ENCODE measurements at regions of chr17 and their contacts with region 1.

Region 1: DNA sequence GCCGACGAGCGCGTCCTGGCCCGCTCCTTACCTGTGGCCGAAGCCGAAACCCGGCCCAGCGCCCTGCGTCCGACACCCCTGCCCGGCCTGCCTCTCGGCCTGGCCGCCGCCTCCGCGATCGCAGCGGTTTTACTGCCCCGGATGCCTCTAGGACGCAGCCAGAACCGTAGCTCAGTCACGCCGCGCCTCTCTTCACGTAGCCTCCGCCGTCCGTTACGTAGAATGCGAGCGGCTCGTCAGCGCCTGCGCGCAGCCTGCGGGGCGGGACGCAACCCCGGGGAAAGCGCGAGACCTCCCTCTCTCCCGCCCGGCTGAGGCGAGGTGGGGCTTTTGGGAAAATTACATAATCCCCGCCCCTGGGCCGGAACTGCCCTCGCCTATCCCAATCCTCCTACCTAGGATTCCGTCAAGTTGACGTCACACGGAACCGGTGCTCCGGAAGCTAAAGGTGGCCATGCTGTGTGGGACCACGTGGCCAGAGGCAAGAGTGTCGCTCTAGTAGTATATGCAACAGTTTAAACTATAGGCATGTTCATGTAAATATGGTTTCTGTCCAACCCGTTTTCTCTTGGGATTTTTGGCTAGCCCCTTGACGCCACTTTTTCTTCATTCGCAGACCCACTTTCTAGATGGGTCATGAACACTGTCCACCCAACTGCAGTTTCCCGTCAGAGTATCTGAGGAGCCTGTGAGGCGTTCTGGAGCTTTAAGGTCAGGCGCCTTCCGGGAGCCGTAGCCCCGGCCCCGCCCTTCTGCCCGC is at the start of gene CCDC47:
- DNase-seq: peak; percentile 96
- ATAC-seq: peak; percentile 76
- H3K4me3 Mint-ChIP-seq: peak within 1 kb of the TSS; percentile 92
- H3K27ac Mint-ChIP-seq: peak within 1 kb of the TSS; percentile 99
- H3K4me1 Mint-ChIP-seq: peaks cover 59% of the 10 kb centered on the region
- H3K27me3 Mint-ChIP-seq: no peaks in the 10 kb centered on the region
- CTCF ChIP-seq: no peak
- total RNA-seq, gene CCDC47: 41.4 and 47.6 TPM in 2 replicates

Region 2: DNA sequence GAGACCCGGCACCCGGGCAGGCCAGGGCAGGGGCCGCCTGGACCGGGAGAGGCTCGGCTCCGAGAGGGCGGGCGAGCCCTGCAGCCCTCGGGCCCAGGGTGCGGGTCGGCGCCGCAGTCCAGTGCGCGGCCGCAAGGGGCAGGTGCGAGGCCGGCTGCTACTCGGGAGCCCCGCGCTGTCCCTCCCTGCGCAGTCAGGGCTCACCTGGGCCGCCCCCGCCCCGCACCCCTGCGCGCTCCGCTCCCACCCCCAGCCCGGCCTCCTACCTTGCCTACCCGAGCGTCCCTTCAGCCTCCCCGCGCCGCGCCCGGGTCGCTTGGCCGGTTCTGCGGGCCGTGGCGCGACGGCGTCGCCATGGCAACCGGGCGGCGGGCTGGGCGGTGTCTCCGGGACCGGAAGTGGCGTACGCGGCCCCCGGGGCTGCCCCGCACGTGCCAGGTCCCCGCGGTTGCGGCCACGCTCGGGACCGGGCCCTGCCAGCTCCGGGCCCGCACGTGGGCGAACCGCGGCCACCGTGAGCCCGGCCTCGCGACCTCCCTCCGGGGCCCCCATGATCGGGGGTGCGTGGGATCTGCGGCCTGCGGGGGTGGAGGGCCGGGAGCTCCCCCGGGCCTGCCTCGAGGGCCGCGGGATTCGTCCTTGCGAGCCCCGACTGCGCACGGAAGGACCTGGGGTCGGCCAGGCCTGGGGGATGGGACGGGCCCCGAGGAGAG is 327.4 kb before region 1 on chr17 and contains the start of gene CYB561:
- CTCF ChIA-PET with region 1: no interaction called
- POLR2A ChIA-PET with region 1: interaction called, 4 read pairs
- intact Hi-C with region 1: loop called (anchors 5 kb)
- DNase-seq: peak; percentile 88
- ATAC-seq: peak; percentile 68
- H3K4me3 Mint-ChIP-seq: peak within 1 kb of the TSS; percentile 73
- H3K27ac Mint-ChIP-seq: peak within 1 kb of the TSS; percentile 78
- H3K4me1 Mint-ChIP-seq: peaks cover 17% of the 10 kb centered on the region
- H3K27me3 Mint-ChIP-seq: no peaks in the 10 kb centered on the region
- CTCF ChIP-seq: no peak
- total RNA-seq, gene CYB561: 18.9 and 19.9 TPM in 2 replicates

Region 3: DNA sequence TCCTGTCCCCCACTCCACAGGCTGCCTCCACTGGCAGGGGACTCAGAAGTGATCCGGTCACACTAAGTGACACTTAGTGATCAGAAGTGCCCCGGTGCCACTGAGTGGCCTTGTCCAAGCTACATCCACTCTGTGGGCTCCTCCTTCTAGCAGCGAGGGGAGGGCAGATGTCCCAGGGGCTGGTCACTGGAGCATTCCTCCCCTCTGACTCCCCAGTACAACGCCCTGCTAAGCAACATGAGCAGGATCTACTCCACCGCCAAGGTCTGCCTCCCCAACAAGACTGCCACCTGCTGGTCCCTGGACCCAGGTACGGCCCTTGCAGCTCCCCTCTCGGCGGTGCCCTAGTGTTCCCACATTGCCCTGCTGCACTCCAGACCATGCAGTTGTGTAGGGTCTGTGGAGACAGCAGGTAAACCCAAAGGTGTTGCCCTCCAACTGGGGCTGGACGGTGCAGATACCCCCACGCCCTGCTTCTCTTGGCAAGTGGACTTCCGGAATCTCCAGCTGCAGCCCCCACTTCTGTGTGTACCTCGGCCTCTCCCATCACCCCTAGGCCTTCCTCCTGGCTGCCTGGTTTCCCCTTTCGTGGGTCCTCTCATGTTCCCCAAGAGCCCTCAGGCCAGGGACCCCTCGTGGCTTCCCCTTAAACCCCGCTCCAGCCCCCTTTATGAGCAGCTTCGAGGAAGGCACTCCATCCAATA is 294.6 kb before region 1 on chr17:
- CTCF ChIA-PET with region 1: no interaction called
- POLR2A ChIA-PET with region 1: no interaction called
- intact Hi-C with region 1: no loop called
- DNase-seq: peak; percentile 59
- ATAC-seq: peak; percentile 80
- H3K4me3 Mint-ChIP-seq: peak overlapping the region; percentile 54
- H3K27ac Mint-ChIP-seq: no peak overlapping the region
- H3K4me1 Mint-ChIP-seq: peaks cover 17% of the 10 kb centered on the region
- H3K27me3 Mint-ChIP-seq: peaks cover 32% of the 10 kb centered on the region
- CTCF ChIP-seq: no peak

Region 4: DNA sequence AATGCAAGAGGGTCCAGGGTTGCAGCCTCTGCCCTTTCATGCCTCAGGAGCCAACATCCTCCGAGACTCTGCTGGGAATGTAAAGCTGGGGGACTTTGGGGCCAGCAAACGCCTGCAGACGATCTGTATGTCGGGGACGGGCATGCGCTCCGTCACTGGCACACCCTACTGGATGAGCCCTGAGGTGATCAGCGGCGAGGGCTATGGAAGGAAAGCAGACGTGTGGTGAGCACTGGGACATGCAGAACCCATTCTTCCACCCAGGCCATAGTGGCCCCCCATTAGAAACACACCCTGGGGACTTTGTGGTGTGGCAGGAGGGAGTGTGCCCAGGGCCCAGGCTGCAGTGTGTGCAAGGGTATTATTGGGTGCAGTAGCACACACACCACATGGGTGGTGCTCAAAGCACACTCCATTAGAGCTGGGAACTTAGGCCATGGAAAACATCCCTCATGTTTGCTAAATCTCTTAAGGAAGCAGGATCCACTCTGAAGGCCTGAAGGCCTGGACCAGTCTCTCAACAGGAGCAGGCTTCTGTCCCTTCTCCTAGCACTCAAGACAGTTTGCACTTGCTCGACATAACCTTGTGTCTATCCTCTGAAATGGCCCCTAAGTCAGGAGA is 81.3 kb before region 1 on chr17:
- CTCF ChIA-PET with region 1: interaction called, 4 read pairs
- POLR2A ChIA-PET with region 1: interaction called, 247 read pairs
- intact Hi-C with region 1: no loop called
- DNase-seq: no peak
- ATAC-seq: no peak
- H3K4me3 Mint-ChIP-seq: no peak overlapping the region
- H3K27ac Mint-ChIP-seq: peak overlapping the region; percentile 57
- H3K4me1 Mint-ChIP-seq: peaks cover 48% of the 10 kb centered on the region
- H3K27me3 Mint-ChIP-seq: no peaks in the 10 kb centered on the region
- CTCF ChIP-seq: no peak

Region 5: DNA sequence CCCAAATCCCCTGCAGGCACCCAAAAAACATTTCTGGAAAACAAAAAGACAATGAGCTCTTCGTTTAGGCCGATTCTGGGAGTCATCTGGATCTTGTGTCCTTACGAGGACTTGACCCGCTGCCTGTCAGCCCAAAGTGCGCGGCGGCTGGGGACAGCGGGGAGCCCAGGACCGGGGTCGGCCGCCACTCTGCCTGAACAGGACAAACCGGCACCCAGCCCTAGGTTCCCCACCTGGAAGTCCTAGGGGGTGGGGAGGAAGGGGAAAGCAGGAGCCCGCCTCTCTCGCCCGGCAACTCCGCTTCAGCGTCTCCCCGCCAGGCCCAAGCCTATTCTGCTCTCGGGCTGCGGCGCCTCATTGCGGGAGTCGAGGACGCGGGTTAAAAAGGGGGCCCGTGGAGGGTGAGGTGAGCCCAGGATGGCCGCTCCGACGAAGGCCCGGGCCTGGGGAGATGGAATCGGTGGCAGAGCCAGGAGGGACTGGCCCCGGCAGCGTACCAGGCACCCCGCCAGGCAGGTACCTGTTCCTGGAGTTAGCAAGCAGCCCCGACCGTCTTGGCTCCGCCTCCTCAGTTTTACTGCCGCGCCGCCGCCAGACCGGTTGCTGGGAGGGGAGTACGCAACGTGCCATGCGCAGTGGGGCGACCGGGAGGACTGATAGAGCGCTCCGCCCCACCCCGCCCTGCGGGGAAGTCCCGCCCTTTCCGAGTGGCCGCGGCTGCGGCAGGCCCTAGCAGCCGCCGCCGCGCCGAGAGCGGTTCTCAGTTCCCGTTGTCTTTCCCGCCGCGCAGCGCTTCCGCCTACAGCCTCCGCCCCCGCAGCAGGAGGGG is 32.1 kb before region 1 on chr17 and contains the start of gene STRADA:
- CTCF ChIA-PET with region 1: interaction called, 6 read pairs
- POLR2A ChIA-PET with region 1: interaction called, 256 read pairs
- intact Hi-C with region 1: loop called (anchors 1 kb)
- DNase-seq: peak; percentile 99
- ATAC-seq: peak; percentile 86
- H3K4me3 Mint-ChIP-seq: peak within 1 kb of the TSS; percentile 86
- H3K27ac Mint-ChIP-seq: peak within 1 kb of the TSS; percentile 96
- H3K4me1 Mint-ChIP-seq: peaks cover 28% of the 10 kb centered on the region
- H3K27me3 Mint-ChIP-seq: no peaks in the 10 kb centered on the region
- CTCF ChIP-seq: no peak
- total RNA-seq, gene STRADA: 72.5 and 80.2 TPM in 2 replicates

Region 6: DNA sequence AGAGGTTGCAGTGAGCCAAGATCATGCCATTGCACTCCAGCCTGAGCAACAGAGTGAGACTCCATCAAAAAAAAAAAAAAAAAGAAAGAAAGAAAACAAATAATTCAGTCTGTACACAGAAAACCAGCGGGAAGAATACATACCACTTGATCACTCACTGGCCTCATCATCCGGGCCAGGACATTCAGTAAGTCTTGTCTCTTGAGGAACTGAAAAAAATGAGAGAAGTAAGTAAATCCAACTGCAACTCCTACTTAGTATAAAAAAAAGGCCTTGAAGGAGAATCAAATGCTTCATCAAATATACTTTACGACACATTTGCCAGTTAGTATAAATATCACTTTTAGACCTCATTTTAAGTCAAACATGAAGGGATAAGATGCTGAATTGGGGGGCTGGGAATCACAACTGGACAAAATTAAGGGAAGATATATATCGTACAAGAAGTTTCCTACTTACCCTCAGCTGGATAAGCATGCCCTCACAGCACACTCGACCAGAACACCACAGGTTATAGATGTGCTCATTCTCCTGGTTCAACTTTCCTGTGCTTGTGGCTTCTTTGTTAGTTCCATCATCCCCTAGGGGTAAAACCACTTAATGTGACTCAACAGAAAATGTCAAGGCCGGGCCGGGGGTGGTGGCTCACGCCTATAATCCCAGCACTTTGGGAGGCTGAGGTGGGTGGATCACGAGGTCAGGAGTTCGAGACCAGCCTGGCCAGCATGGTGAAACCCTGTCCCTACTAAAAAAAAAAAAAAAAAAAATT is 12.6 kb before region 1 on chr17:
- CTCF ChIA-PET with region 1: no interaction called
- POLR2A ChIA-PET with region 1: interaction called, 47 read pairs
- intact Hi-C with region 1: no loop called
- DNase-seq: no peak
- ATAC-seq: peak; percentile 60
- H3K4me3 Mint-ChIP-seq: peak overlapping the region; percentile 0
- H3K27ac Mint-ChIP-seq: peak overlapping the region; percentile 32
- H3K4me1 Mint-ChIP-seq: peaks cover 21% of the 10 kb centered on the region
- H3K27me3 Mint-ChIP-seq: no peaks in the 10 kb centered on the region
- CTCF ChIP-seq: no peak

Region 7: DNA sequence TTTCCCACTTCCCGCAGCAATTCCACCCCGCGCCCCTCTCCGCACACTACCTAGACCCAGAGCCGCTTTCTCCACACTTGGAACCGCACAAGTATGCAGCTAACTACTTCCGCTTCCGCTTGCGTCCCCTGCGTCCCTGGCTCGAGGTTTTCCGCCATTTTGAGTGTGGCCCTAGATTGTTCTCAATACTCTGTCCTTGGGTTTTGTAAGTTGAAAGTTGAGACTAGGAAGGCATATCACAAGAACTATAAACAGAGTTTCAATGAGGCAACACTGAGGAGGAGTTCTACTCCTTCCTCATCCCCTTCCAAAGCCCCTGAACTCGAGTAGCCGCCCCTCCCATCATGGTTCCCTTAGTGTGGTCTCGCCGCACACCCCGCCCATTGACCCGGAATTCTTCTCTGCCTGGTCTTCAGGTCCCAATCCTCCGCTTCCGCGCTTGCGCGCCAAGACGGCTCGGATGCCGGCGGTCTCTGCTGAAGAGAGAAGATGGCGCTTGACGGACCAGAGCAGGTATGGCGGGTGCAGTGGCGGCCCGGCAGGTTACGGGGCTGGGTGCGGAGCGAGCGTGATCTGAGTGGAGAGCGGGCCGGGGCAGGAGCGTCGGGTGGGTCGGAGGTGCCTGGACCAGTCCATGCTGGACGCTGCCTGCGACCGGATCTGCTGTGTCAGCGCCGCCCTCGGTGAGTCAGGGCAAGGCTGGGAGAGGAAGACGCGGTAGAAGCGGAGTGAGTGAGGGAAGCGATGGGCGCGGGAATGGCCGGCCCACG is 53.6 kb after region 1 on chr17 and contains the starts of genes FTSJ3 and PSMC5:
- CTCF ChIA-PET with region 1: no interaction called
- POLR2A ChIA-PET with region 1: interaction called, 33 read pairs
- intact Hi-C with region 1: loop called (anchors 1 kb)
- DNase-seq: peak; percentile 90
- ATAC-seq: peak; percentile 95
- H3K4me3 Mint-ChIP-seq: peak within 1 kb of the TSS; percentile 98
- H3K27ac Mint-ChIP-seq: peak within 1 kb of the TSS; percentile 100
- H3K4me1 Mint-ChIP-seq: peaks cover 75% of the 10 kb centered on the region
- H3K27me3 Mint-ChIP-seq: no peaks in the 10 kb centered on the region
- CTCF ChIP-seq: no peak
- total RNA-seq, gene FTSJ3: 82.0 and 85.1 TPM in 2 replicates
- total RNA-seq, gene PSMC5: 157 TPM in 2 replicates

Region 8: GRCh38 chr17:64020056-64020766 is 246.7 kb after region 1 on chr17 and contains the start of gene ICAM2:
- CTCF ChIA-PET with region 1: no interaction called
- POLR2A ChIA-PET with region 1: interaction called, 8 read pairs
- intact Hi-C with region 1: loop called (anchors 1 kb)
- DNase-seq: peak; percentile 69
- ATAC-seq: peak; percentile 78
- H3K4me3 Mint-ChIP-seq: peak within 1 kb of the TSS; percentile 97
- H3K27ac Mint-ChIP-seq: peak within 1 kb of the TSS; percentile 99
- H3K4me1 Mint-ChIP-seq: peaks cover 81% of the 10 kb centered on the region
- H3K27me3 Mint-ChIP-seq: no peaks in the 10 kb centered on the region
- CTCF ChIP-seq: no peak
- total RNA-seq, gene ICAM2: 44.5 and 44.7 TPM in 2 replicates

Region 9: GRCh38 chr17:64063766-64064224 is 290.2 kb after region 1 on chr17:
- CTCF ChIA-PET with region 1: no interaction called
- POLR2A ChIA-PET with region 1: no interaction called
- intact Hi-C with region 1: no loop called
- DNase-seq: no peak
- ATAC-seq: peak; percentile 58
- H3K4me3 Mint-ChIP-seq: no peak overlapping the region
- H3K27ac Mint-ChIP-seq: no peak overlapping the region
- H3K4me1 Mint-ChIP-seq: peaks cover 14% of the 10 kb centered on the region
- H3K27me3 Mint-ChIP-seq: no peaks in the 10 kb centered on the region
- CTCF ChIP-seq: no peak

Region 10: DNA sequence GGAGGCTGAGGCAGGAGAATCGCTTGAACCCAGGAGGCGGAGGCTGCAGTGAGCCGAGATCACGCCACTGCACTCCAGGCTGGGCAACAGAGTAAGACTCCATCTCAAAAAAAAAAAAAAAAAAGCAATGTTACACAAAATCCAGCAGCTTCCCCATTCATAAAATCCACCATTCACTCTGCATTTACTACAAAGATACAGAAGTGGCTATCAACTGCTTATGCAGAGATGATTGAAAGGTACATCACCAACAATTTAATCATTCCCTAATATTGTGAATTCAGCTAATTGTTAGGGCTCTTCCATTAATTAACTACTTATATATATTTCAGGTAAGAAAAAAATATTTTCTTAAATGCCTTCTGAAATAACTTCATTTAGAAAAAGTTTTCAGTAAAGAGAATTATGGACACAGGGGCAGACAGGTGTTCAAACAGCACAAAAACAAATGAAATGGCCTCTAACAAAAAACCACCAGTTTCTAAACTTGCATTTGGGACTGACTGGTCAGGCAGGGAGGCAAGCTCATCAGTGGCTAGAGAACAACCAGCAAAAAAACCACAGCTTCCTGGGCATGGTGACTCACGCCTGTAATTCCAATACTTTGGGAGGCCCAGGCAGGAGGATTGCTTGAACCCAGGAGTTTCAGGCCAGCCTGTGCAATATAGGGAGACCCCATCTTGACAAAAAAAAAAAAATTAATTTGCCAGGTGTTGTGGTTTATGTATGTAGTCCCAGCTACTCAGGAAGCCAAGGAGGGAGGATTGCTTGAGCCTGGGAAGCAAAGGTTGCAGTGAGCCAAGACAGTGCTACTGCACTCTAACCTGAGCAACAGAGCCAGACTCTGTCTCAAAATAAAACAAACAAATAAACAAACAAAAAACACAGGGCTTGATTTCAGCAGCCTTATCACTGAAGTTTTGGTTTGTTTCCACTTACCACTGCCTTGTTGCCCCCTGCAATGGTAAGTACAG is 330.1 kb after region 1 on chr17:
- CTCF ChIA-PET with region 1: no interaction called
- POLR2A ChIA-PET with region 1: no interaction called
- intact Hi-C with region 1: no loop called
- DNase-seq: no peak
- ATAC-seq: no peak
- H3K4me3 Mint-ChIP-seq: no peak overlapping the region
- H3K27ac Mint-ChIP-seq: no peak overlapping the region
- H3K4me1 Mint-ChIP-seq: no peaks in the 10 kb centered on the region
- H3K27me3 Mint-ChIP-seq: no peaks in the 10 kb centered on the region
- CTCF ChIP-seq: no peak